Activated naive CD8-positive, alpha-beta T cell treated with anti-CD3 and anti-CD28 coated beads, Interleukin-2, amount 10 ng/mL, durations not matched to agents 7 days and 5 days (primary cell): ENCODE measurements at regions of chr17 and their contacts with region 1.

Region 1: DNA sequence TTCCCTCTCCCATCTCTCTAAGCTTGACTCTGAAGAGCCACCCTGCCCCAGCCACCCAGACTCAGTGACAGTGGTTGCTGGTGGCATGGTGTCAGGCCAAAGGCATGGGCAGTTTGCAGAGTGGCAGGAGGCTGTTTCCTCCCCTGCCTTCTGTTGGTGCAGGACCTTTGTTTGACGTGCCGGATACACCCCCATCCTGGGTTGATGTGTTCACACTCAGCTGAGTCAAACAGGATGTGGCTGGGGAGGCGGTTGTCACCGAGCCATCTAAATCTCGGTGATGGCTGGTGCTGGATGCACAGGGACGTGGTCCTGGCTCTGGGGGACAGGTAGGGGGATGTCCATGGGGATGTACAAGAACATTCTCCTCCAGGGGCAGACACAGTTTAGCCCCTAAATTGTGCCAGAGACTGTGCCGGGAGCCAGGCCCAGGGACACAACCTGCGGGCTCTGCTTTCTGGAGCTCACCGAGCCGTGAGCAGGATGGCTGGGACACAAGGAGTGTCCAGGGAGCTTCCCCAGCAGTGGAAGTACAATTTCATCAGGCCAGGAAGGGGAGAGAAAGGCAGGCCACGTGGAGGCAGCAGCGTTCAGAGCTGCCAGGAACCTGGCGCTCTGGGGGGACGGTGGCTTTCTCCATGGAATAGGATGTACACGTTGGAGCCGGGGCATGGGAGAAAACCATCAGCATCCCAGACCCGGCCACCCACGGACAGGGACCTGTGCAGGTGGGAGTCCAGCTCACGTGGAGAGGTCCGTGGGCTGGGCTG is 264.2 kb downstream of the SEC14L1 start:
- DNase-seq: peak; percentile 81
- ATAC-seq: peak; percentile 74
- H3K4me3 Mint-ChIP-seq: peak overlapping the region; percentile 78
- H3K27ac Mint-ChIP-seq: peak overlapping the region; percentile 91
- H3K4me1 Mint-ChIP-seq: peaks cover 73% of the 10 kb centered on the region
- H3K27me3 Mint-ChIP-seq: no peaks in the 10 kb centered on the region

Region 2: GRCh38 chr17:77331301-77331864 is 73.6 kb before region 1 on chr17:
- POLR2A ChIA-PET with region 1: interaction called, 10 read pairs
- DNase-seq: peak; percentile 96
- ATAC-seq: peak; percentile 92
- H3K4me3 Mint-ChIP-seq: peak overlapping the region; percentile 86
- H3K27ac Mint-ChIP-seq: peak overlapping the region; percentile 95
- H3K4me1 Mint-ChIP-seq: peaks cover 36% of the 10 kb centered on the region
- H3K27me3 Mint-ChIP-seq: no peaks in the 10 kb centered on the region

Region 3: GRCh38 chr17:77354420-77355241 is 50.4 kb before region 1 on chr17:
- POLR2A ChIA-PET with region 1: no interaction called
- DNase-seq: peak; percentile 19
- ATAC-seq: no peak
- H3K4me3 Mint-ChIP-seq: no peak overlapping the region
- H3K27ac Mint-ChIP-seq: no peak overlapping the region
- H3K4me1 Mint-ChIP-seq: peaks cover 15% of the 10 kb centered on the region
- H3K27me3 Mint-ChIP-seq: peaks cover 1% of the 10 kb centered on the region

Region 4: DNA sequence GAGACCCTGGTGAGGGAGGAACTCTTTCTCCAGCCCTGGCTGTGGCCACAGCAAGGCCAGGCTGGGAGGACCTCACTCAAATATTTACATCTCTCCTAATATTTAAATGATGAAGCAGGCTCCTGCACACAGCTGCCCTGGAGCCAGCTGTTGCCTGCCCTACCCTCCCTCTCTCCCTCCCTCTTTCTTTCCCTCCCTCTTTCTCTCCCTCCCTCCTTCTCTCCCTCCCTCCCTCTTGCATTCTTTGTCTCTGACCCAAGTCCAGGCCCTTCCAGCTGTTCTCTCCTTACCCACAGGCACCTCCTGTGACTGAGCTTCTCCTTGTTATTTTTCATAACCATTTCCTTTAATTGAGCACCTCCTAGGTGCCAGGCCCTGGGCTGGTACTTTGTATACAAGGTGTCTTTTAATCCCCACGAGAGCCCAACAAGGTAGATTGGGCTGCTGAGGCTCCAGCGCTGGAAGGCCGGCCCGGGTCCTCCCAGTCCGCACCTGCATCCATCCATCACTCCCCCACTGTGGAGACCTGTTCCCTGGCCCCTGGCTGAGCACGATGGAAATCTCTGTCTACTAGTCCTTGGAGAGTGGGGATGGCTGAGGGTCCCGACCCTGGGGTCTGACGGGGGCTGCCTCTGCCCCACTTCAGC is 21.9 kb before region 1 on chr17:
- POLR2A ChIA-PET with region 1: interaction called, 36 read pairs
- DNase-seq: no peak
- ATAC-seq: peak; percentile 2
- H3K4me3 Mint-ChIP-seq: peak overlapping the region; percentile 69
- H3K27ac Mint-ChIP-seq: peak overlapping the region; percentile 90
- H3K4me1 Mint-ChIP-seq: peaks cover 60% of the 10 kb centered on the region
- H3K27me3 Mint-ChIP-seq: no peaks in the 10 kb centered on the region

Region 5: DNA sequence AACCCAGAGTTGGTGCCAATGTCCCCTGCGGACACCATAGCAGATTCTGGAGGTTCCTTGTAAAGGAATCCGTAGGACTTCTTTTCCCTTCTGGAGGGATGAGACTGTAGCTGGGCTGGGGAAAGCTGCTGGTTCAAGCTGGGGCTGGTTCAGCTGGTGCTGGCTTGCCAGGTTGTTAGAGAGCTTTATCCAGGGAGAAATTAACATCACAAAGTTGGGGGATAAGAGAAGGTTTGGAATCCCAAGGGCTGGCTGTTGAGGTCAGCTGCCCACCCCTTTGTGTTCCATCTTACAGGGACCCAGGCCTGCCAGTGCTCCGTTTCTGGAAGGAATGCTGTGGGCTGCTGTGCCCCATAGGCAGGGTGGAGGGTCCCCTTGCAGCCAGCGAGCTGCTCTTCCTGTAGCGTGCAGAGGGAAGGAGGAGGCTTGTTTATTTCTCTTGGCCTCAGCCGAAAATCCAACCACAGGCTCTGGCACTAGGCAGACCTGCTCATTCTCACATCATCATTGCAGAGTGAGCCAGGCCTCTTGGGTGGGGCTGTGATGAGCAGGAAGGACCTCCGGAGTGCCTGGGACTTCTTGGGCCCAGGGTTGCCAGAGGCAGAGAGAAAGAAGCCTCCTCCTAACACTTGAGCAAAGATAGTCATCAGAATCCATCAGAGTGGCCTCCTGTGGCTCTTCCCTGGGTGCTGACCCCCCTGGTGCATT is 13.2 kb before region 1 on chr17:
- POLR2A ChIA-PET with region 1: interaction called, 39 read pairs
- DNase-seq: no peak
- ATAC-seq: peak; percentile 58
- H3K4me3 Mint-ChIP-seq: peak overlapping the region; percentile 56
- H3K27ac Mint-ChIP-seq: peak overlapping the region; percentile 81
- H3K4me1 Mint-ChIP-seq: peaks cover 69% of the 10 kb centered on the region
- H3K27me3 Mint-ChIP-seq: no peaks in the 10 kb centered on the region

Region 6: GRCh38 chr17:77420804-77421629 is 16.0 kb after region 1 on chr17:
- POLR2A ChIA-PET with region 1: interaction called, 58 read pairs
- DNase-seq: peak; percentile 64
- ATAC-seq: peak; percentile 48
- H3K4me3 Mint-ChIP-seq: peak overlapping the region; percentile 80
- H3K27ac Mint-ChIP-seq: peak overlapping the region; percentile 89
- H3K4me1 Mint-ChIP-seq: peaks cover 37% of the 10 kb centered on the region
- H3K27me3 Mint-ChIP-seq: no peaks in the 10 kb centered on the region

Region 7: GRCh38 chr17:77444984-77445759 is 40.2 kb after region 1 on chr17:
- POLR2A ChIA-PET with region 1: interaction called, 13 read pairs
- DNase-seq: peak; percentile 84
- ATAC-seq: peak; percentile 61
- H3K4me3 Mint-ChIP-seq: peak overlapping the region; percentile 85
- H3K27ac Mint-ChIP-seq: peak overlapping the region; percentile 90
- H3K4me1 Mint-ChIP-seq: peaks cover 79% of the 10 kb centered on the region
- H3K27me3 Mint-ChIP-seq: no peaks in the 10 kb centered on the region